ENCODE measurements at regions of chr12 and their contacts with region 1.

Region 1: GRCh38 chr12:101839324-101840283 is 8.8 kb upstream of the GNPTAB start:
- DNase-seq: peak; percentile 83
- ATAC-seq: peak; percentile 54
- H3K4me3 Mint-ChIP-seq: no peak overlapping the region
- H3K27ac Mint-ChIP-seq: peak overlapping the region; percentile 53
- H3K4me1 Mint-ChIP-seq: peaks cover 17% of the 10 kb centered on the region
- H3K27me3 Mint-ChIP-seq: peaks cover 2% of the 10 kb centered on the region

Region 2: DNA sequence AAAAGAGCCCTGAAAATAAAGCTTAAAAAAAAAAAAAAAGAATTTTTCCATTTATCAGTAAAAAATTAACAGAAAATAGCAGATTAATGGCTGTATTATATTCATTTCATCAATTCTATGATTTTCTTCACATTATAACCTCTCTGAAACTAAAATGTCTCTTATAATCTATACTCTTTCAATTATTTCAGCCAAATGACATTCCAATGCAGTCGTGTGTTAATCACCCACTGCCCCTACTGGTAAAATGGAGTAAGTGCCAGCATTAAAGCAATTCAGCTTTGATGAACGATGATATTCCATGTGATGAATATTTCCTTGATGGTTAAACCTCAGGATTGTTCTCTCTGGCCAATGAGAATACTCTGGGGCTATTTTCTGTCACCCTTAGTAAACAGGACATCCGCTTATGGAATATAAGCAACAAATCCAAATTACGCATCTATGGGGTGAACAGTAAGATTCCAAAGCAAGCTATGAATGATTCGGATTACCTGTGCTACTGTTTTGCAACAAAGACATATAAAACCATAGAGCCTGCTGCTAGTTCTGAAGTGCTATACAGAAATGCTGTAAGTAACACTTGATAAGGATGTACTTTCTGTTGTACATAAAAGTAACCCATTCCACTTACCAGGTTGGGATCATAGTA is 80.1 kb before region 1 on chr12:
- CTCF ChIA-PET with region 1: interaction called, 14 read pairs
- POLR2A ChIA-PET with region 1: no interaction called
- DNase-seq: no peak
- ATAC-seq: no peak
- H3K4me3 Mint-ChIP-seq: no peak overlapping the region
- H3K27ac Mint-ChIP-seq: no peak overlapping the region
- H3K4me1 Mint-ChIP-seq: no peaks in the 10 kb centered on the region
- H3K27me3 Mint-ChIP-seq: no peaks in the 10 kb centered on the region

Region 3: DNA sequence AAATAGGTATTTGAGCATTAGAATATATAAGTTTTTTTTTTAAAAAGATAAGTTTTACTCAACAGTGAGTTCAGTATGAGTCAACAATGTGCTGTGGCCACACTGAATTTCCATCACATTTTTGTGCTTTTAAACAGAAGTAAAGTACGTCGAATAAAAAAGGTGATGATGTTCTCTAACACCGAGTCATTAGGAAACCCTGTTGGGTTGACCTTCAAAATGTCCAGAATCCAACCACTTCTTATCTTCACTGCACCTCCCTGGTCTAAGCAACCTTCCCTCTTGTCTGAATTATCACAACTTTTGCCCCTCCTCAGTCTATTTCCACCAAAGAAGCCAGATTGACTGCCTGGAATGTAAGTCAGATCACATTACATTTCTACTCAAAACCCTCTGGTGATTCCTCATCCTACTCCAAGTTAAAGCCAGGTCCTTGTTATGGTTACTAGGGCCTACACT is 57.3 kb before region 1 on chr12:
- CTCF ChIA-PET with region 1: interaction called, 39 read pairs
- POLR2A ChIA-PET with region 1: no interaction called
- DNase-seq: no peak
- ATAC-seq: no peak
- H3K4me3 Mint-ChIP-seq: no peak overlapping the region
- H3K27ac Mint-ChIP-seq: peak overlapping the region; percentile 64
- H3K4me1 Mint-ChIP-seq: peaks cover 47% of the 10 kb centered on the region
- H3K27me3 Mint-ChIP-seq: no peaks in the 10 kb centered on the region

Region 4: GRCh38 chr12:101799774-101800173 is 39.8 kb before region 1 on chr12:
- CTCF ChIA-PET with region 1: interaction called, 57 read pairs
- POLR2A ChIA-PET with region 1: no interaction called
- DNase-seq: no peak
- ATAC-seq: peak; percentile 65
- H3K4me3 Mint-ChIP-seq: peak overlapping the region; percentile 27
- H3K27ac Mint-ChIP-seq: peak overlapping the region; percentile 71
- H3K4me1 Mint-ChIP-seq: peaks cover 71% of the 10 kb centered on the region
- H3K27me3 Mint-ChIP-seq: no peaks in the 10 kb centered on the region

Region 5: DNA sequence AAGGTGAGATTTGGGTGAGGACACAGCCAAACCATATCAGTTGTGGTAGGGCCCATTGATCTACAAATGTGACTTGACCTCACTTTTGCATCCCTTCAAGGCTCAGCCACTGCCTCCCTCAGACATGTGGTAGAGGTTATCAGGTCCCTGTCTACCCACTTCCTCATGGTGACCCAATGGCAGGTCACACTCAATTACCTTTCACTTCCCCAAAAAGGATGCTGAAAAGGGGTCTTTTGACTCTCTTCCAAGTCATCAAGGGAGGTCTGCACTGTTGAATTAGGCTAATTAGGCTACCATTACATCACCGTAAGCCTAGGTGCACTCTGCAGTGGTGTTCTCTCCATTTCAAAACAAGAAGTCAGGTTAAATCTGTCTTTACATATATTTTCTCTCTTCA is 15.1 kb after region 1 on chr12:
- CTCF ChIA-PET with region 1: interaction called, 13 read pairs
- POLR2A ChIA-PET with region 1: no interaction called
- DNase-seq: no peak
- ATAC-seq: no peak
- H3K4me3 Mint-ChIP-seq: no peak overlapping the region
- H3K27ac Mint-ChIP-seq: no peak overlapping the region
- H3K4me1 Mint-ChIP-seq: peaks cover 19% of the 10 kb centered on the region
- H3K27me3 Mint-ChIP-seq: no peaks in the 10 kb centered on the region

Region 6: GRCh38 chr12:101992091-101992490 is 152.5 kb after region 1 on chr12:
- CTCF ChIA-PET with region 1: no interaction called
- POLR2A ChIA-PET with region 1: no interaction called
- DNase-seq: no peak
- ATAC-seq: no peak
- H3K4me3 Mint-ChIP-seq: no peak overlapping the region
- H3K27ac Mint-ChIP-seq: no peak overlapping the region
- H3K4me1 Mint-ChIP-seq: no peaks in the 10 kb centered on the region
- H3K27me3 Mint-ChIP-seq: peaks cover 30% of the 10 kb centered on the region